Breast epithelium (tissue), 4 donors: ENCODE measurements at regions of chr3 and their contacts with region 1.

Region 1: GRCh38 chr3:21860082-21860475 is 109.1 kb upstream of the ZNF385D start:
- DNase-seq: no peak
- H3K4me3 ChIP-seq: no peak overlapping the region
- H3K27ac ChIP-seq: no peak overlapping the region
- H3K4me1 ChIP-seq: no peaks in the 10 kb centered on the region
- H3K27me3 ChIP-seq: no peaks in the 10 kb centered on the region
- CTCF ChIP-seq: no peak
- POLR2A ChIP-seq: no peak

Region 2: DNA sequence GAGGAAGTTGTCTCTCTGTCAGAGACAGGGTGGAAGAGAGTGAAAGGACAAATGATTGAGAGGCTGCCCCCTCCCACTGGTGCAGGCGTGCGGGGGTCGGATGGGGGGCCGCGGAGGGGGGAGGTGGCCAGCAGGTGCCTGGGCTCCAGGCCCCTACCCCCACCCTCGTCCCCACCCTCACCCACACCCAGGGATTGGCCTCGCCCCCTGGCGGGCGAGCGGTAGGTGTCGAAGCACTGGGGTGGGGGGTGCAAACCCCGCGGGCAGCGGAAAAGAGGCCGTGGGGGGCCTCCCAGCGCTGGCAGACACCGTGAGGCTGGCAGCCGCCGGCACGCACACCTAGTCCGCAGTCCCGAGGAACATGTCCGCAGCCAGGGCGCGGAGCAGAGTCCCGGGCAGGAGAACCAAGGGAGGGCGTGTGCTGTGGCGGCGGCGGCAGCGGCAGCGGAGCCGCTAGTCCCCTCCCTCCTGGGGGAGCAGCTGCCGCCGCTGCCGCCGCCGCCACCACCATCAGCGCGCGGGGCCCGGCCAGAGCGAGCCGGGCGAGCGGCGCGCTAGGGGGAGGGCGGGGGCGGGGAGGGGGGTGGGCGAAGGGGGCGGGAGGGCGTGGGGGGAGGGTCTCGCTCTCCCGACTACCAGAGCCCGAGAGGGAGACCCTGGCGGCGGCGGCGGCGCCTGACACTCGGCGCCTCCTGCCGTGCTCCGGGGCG is 1820.2 kb before region 1 on chr3 and contains the start of gene KAT2B:
- intact Hi-C with region 1: loop called (anchors 5 kb)
- DNase-seq: peak; percentile 52 to 58
- H3K4me3 ChIP-seq: peak within 1 kb of the TSS; percentile 88 to 92 (median 89)
- H3K27ac ChIP-seq: peak within 1 kb of the TSS; percentile 94
- H3K4me1 ChIP-seq: peaks cover 0 to 6% of the 10 kb centered on the region in 2 donors
- H3K27me3 ChIP-seq: no peaks in the 10 kb centered on the region
- CTCF ChIP-seq: peak; percentile 45 to 61 (median 56)
- POLR2A ChIP-seq: no peak
- total RNA-seq, gene KAT2B: 22.6 to 34.7 (median 34.0) TPM

Region 3: DNA sequence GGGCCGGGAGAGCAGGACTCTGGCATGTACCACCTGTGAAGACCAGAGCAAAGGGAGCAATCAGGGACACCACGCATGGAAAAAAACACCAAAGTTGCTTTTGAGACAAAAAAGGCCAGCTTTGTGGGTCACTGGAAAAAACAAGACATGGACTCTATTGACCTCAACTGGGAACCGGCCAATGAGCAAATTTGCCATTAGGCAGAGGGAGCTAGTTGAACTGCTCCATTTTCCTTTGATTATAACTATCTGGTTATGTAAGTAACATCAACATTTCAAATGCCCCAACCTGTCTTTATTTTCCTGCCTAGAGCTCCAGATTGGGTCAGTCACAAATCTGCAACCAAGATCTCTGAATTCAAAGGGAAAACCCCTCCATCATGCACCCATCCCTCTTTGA is 195.1 kb before region 1 on chr3:
- intact Hi-C with region 1: no loop called
- DNase-seq: no peak
- H3K4me3 ChIP-seq: no peak overlapping the region
- H3K27ac ChIP-seq: no peak overlapping the region
- H3K4me1 ChIP-seq: no peaks in the 10 kb centered on the region
- H3K27me3 ChIP-seq: no peaks in the 10 kb centered on the region
- CTCF ChIP-seq: no peak
- POLR2A ChIP-seq: no peak